Activated T-helper 2 cell treated with anti-CD3 and anti-CD28 coated beads, Interferon-gamma antibody, Interleukin-2, Interleukin-4, amounts not matched to agents 10 μg/mL and 5 μg/mL and 100 μg/mL, durations not matched to agents 14 hours and 24 hours and 36 hours (primary cell): ENCODE measurements at regions of chr4 and their contacts with region 1.

Region 1: GRCh38 chr4:153488006-153488891 is 22.1 kb downstream of the TMEM131L start:
- DNase-seq: peak; percentile 61
- H3K4me3 Mint-ChIP-seq: peak overlapping the region; percentile 64
- H3K27ac Mint-ChIP-seq: peak overlapping the region; percentile 90
- H3K4me1 Mint-ChIP-seq: peaks cover 63% of the 10 kb centered on the region
- H3K27me3 Mint-ChIP-seq: no peaks in the 10 kb centered on the region

Region 2: GRCh38 chr4:153344131-153345010 is 143.9 kb before region 1 on chr4 and contains the start of gene MND1:
- intact Hi-C with region 1: loop called (anchors 2 kb)
- DNase-seq: peak; percentile 91
- H3K4me3 Mint-ChIP-seq: peak within 1 kb of the TSS; percentile 93
- H3K27ac Mint-ChIP-seq: peak within 1 kb of the TSS; percentile 87
- H3K4me1 Mint-ChIP-seq: peaks cover 40% of the 10 kb centered on the region
- H3K27me3 Mint-ChIP-seq: peaks cover 17% of the 10 kb centered on the region
- total RNA-seq, gene MND1: 15.4 and 17.8 TPM in 2 replicates

Region 3: GRCh38 chr4:153466081-153466948 is 21.9 kb before region 1 on chr4 and contains the start of gene TMEM131L:
- intact Hi-C with region 1: loop called (anchors 1 kb)
- DNase-seq: peak; percentile 66
- H3K4me3 Mint-ChIP-seq: peak within 1 kb of the TSS; percentile 82
- H3K27ac Mint-ChIP-seq: peak within 1 kb of the TSS; percentile 82
- H3K4me1 Mint-ChIP-seq: peaks cover 53% of the 10 kb centered on the region
- H3K27me3 Mint-ChIP-seq: no peaks in the 10 kb centered on the region
- total RNA-seq, gene TMEM131L: 28.1 and 29.7 TPM in 2 replicates

Region 4: DNA sequence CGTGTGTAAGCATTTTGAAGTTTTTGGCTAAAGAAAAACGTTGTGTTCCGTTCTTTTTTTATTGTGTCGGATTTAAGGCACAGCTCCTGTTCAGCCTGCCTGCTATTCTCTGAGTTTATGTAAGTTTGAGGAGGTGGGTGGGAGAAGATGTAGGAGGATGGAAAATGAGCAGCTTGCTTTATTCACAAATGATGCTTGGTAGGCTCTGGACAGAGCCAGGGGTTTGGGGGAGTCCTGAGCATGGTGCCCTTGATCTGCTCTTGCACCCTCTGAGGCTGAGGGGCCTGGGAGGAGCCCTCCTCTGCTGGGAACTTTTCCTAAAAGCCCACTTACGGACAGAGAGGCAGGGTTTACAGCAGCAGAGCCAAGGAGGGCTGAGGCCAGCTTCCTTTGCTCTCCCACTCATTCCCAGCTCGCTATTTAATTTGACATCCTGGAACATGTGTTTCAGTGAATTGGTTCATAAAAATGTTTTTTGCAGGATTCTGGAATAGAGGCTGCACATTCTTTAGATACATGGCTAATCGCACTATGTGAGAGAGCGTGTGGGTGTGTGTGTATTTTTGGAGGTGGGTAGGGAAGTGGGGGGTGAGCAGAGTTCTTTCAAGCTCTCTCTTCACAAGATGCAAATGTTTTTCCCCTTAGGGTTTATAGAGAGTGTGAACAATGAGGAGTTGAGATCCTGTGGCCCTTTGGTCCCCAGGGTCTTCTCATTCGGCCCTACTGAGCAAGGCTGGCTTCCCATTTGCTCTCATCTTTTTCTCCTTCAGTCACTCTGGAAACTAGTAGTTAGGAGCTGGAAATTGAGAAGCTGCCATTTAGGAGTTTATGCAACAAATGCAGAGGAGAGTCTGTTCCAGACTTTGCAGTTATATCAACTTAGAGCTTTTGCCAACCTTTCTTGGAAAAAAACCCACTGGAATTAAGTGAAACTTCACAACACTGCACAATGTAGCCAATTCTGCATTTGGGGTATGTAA is 10.0 kb after region 1 on chr4:
- intact Hi-C with region 1: loop called (anchors 1 kb)
- DNase-seq: no peak
- H3K4me3 Mint-ChIP-seq: peak overlapping the region; percentile 70
- H3K27ac Mint-ChIP-seq: peak overlapping the region; percentile 89
- H3K4me1 Mint-ChIP-seq: peaks cover 80% of the 10 kb centered on the region
- H3K27me3 Mint-ChIP-seq: no peaks in the 10 kb centered on the region

Region 5: GRCh38 chr4:153528705-153529485 is 40.6 kb after region 1 on chr4:
- intact Hi-C with region 1: loop called (anchors 1 kb)
- DNase-seq: no peak
- H3K4me3 Mint-ChIP-seq: peak overlapping the region; percentile 71
- H3K27ac Mint-ChIP-seq: peak overlapping the region; percentile 91
- H3K4me1 Mint-ChIP-seq: peaks cover 74% of the 10 kb centered on the region
- H3K27me3 Mint-ChIP-seq: no peaks in the 10 kb centered on the region

Region 6: DNA sequence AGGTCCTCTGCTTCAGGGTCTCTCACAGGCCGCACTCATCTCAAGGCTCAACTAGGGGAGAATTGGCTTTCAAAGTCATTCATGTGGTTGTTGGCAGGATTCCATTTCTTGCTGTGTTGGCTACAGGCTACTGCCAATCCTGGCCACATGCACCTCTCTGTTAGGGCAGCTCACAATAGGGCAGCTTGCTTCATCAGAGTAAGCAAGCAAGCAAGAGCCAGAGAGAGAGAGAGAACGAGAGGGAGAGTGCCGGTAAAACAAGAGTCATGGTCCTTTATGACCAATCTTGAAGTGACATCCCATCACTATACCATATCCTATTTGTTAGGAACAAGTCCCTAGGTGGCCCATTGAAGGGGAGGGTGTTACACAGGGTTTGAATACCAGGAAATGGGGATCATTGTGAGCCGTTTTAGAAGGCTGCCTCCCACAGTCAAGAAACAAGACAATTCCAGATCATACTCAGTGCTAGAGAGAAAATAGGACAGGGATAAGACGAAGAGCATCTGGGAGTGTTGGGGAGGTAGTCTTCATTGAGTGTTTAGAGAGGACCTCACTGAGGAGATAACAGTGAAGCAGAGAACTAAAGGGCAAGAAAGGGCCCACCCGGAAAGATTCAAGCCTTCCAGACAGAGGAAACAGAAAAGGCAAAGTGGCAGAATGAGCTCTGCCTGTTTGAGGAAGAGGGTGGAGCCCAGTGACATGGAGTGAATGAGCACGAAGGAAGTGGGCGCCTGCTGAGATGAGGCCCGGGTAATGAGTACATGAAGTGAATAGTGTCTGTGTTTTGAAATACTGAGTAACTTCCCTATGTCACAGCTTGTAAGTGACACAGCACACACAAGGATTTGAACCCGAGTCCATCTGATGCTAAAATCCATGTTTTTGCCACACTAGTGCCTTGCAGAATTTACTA is 163.1 kb after region 1 on chr4:
- intact Hi-C with region 1: loop called (anchors 5 kb)
- DNase-seq: peak; percentile 43
- H3K4me3 Mint-ChIP-seq: no peak overlapping the region
- H3K27ac Mint-ChIP-seq: peak overlapping the region; percentile 69
- H3K4me1 Mint-ChIP-seq: peaks cover 36% of the 10 kb centered on the region
- H3K27me3 Mint-ChIP-seq: peaks cover 4% of the 10 kb centered on the region